Activated naive CD4-positive, alpha-beta T cell treated with anti-CD3 and anti-CD28 coated beads for 36 hours (primary cell): ENCODE measurements at regions of chr17 and their contacts with region 1.

Region 1: GRCh38 chr17:28552246-28552999 is at the start of gene UNC119:
- DNase-seq: peak; percentile 83
- H3K4me3 Mint-ChIP-seq: peak within 1 kb of the TSS; percentile 90
- H3K27ac Mint-ChIP-seq: peak within 1 kb of the TSS; percentile 52
- H3K4me1 Mint-ChIP-seq: peaks cover 45% of the 10 kb centered on the region
- H3K27me3 Mint-ChIP-seq: no peaks in the 10 kb centered on the region
- total RNA-seq, gene UNC119: 48.6 to 50.3 TPM

Region 2: GRCh38 chr17:28252436-28252835 is 300.0 kb before region 1 on chr17:
- CTCF ChIA-PET with region 1: no interaction called
- intact Hi-C with region 1: loop called (anchors 10 kb)
- DNase-seq: no peak
- H3K4me3 Mint-ChIP-seq: no peak overlapping the region
- H3K27ac Mint-ChIP-seq: no peak overlapping the region
- H3K4me1 Mint-ChIP-seq: peaks cover 5% of the 10 kb centered on the region
- H3K27me3 Mint-ChIP-seq: peaks cover 4% of the 10 kb centered on the region

Region 3: DNA sequence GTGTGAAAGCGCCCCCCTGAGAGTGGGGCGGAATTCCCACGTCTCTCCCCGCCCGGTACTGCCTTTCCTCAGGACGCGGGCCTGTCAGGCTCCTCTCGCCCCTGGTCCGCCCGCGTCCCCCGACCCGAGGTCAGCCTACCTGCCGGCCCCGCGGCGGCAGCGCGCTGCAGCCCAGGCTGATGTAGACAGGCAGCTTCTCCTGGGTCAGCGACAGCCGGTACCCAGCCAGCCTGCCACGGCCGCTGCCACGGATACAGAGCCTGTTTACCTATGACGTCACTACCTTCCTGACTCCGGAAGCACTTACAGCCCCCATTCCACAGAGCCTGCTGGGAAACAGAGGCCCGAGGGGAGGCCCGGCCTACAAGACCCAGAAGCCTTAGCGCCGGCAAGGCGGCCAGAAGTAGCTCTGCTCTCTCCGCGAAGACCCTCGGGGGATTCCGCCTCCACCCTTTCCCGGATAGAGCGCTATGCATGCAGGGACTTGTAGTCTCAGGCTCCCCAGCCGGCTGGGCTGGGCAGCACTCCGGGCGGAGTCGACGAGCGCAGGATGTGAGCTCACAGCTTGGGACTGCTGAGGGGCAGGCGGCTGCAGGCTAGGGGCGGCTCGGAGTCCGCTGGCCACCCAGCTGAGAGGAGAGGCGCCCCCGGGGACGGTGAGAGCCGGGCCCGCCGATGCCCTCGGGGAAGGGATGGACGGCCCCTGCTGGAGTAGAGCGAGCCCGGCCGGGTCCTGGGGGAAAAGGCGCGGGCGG is 217.0 kb before region 1 on chr17 and contains the starts of genes IFT20 and TNFAIP1:
- CTCF ChIA-PET with region 1: interaction called, 3 read pairs
- intact Hi-C with region 1: loop called (anchors 1 kb)
- DNase-seq: peak; percentile 99
- H3K4me3 Mint-ChIP-seq: peak within 1 kb of the TSS; percentile 95
- H3K27ac Mint-ChIP-seq: peak within 1 kb of the TSS; percentile 90
- H3K4me1 Mint-ChIP-seq: peaks cover 34% of the 10 kb centered on the region
- H3K27me3 Mint-ChIP-seq: no peaks in the 10 kb centered on the region
- total RNA-seq, gene IFT20: 17.9 to 18.1 TPM
- total RNA-seq, gene TNFAIP1: 18.6 to 18.7 TPM

Region 4: GRCh38 chr17:28371245-28372202 is 180.9 kb before region 1 on chr17 and contains the start of gene SARM1:
- CTCF ChIA-PET with region 1: no interaction called
- intact Hi-C with region 1: loop called (anchors 5 kb)
- DNase-seq: peak; percentile 85
- H3K4me3 Mint-ChIP-seq: peak within 1 kb of the TSS; percentile 89
- H3K27ac Mint-ChIP-seq: peak within 1 kb of the TSS; percentile 47
- H3K4me1 Mint-ChIP-seq: peaks cover 21% of the 10 kb centered on the region
- H3K27me3 Mint-ChIP-seq: no peaks in the 10 kb centered on the region
- total RNA-seq, gene SARM1: 11.7 to 12.3 TPM

Region 5: DNA sequence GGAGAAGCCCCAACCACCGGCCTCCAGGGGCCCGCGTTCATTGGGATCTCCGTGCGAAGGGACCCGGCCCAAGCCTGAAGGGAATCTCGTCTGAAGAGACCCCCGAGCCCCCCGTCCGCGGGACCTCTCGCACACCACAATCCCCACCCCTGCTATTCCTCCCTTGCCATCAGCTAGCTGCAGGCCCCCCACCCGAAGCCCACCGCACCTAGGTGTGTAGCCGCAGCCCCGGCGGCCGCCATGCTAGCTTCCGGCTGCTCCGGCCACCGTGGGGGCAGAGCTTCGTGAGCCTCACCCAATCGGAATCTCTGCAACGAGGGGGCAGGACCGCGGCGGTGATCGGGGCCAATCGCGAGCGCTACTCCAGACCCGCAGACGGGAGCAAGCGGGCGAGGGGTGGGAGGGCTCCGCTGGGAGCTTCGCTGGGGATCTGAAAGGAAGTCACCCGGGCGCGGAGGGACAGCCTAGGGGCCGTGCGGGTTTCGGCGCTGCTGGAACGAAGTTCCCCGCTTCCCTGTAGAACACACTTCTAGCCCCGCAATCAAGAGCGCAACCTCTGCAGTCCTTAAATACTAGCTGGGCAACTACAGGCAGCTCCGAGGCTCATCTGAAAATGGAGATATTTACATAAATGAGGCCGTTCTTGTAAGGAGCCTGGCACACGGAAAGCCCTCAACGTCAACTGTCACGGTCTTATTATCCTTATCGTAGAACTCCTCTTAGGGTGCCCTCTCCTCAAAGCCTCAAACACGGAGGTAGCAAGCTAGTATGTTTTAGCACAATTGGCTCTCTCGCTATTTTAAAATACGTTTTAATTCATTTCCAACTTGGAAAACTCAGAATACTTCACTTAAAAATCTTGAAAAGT is 19.1 kb after region 1 on chr17 and contains the start of gene PIGS:
- CTCF ChIA-PET with region 1: interaction called, 24 read pairs
- intact Hi-C with region 1: loop called (anchors 1 kb)
- DNase-seq: peak; percentile 96
- H3K4me3 Mint-ChIP-seq: peak within 1 kb of the TSS; percentile 85
- H3K27ac Mint-ChIP-seq: peak within 1 kb of the TSS; percentile 91
- H3K4me1 Mint-ChIP-seq: peaks cover 50% of the 10 kb centered on the region
- H3K27me3 Mint-ChIP-seq: no peaks in the 10 kb centered on the region
- total RNA-seq, gene PIGS: 34.8 to 36.0 TPM

Region 6: GRCh38 chr17:28598799-28599310 is 46.4 kb after region 1 on chr17 and contains the start of gene SPAG5:
- CTCF ChIA-PET with region 1: interaction called, 4 read pairs
- intact Hi-C with region 1: loop called (anchors 1 kb)
- DNase-seq: peak; percentile 96
- H3K4me3 Mint-ChIP-seq: peak within 1 kb of the TSS; percentile 95
- H3K27ac Mint-ChIP-seq: peak within 1 kb of the TSS; percentile 94
- H3K4me1 Mint-ChIP-seq: peaks cover 15% of the 10 kb centered on the region
- H3K27me3 Mint-ChIP-seq: no peaks in the 10 kb centered on the region
- total RNA-seq, gene SPAG5: 210 to 216 TPM

Region 7: DNA sequence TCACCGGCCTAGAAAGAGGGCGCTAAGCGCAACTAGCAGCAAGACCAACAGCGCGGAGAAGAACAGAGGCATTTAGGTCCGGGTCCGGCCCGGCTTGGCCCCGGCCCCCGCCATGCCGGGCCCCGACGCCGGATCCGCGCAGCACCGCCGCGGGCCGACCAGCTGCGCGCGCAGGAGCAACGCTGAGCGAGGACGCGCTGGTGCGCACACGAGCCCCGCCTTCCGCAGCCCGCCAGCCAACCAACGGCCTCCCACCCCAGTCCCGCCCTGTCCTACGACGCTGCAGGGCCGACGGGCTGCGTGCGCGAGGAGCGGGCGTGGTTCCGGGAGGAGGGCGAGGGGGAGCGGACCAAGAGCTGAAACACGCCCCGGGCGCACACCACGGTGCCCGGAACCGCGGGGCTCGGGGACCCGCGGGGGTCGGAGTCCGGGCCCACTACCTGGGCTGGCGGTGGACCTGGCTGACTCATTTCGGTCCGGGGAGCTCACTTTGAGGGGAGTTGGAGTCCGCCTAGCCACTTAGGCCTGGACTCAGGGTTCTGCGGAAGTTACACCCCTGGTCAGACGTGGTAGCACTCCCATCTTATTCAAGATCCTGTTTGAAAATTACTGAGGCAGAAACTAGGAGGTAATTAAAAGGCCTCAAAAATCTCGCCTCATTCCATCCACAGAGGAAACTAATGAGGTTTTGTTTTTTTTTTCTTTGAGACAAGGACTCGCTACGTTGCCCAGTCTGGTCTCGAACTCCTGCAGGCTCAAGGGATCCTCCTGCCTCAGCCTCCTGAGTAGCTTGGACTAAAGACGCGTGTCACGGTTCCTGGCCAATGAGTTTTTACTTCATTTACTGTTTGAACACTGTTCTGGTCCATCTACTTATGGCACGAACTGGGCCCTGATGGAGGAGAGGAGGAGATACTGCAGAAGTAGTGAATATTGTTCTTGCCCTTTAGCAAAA is 92.8 kb after region 1 on chr17 and contains the start of gene BLTP2:
- CTCF ChIA-PET with region 1: interaction called, 3 read pairs
- intact Hi-C with region 1: loop called (anchors 1 kb)
- DNase-seq: peak; percentile 96
- H3K4me3 Mint-ChIP-seq: peak within 1 kb of the TSS; percentile 84
- H3K27ac Mint-ChIP-seq: peak within 1 kb of the TSS; percentile 86
- H3K4me1 Mint-ChIP-seq: peaks cover 36% of the 10 kb centered on the region
- H3K27me3 Mint-ChIP-seq: no peaks in the 10 kb centered on the region
- total RNA-seq, gene BLTP2: 89.4 to 92.0 TPM